Cardiac septum (tissue), 1 donor: ENCODE measurements at regions of chr3 and their contacts with region 1.

Region 1: DNA sequence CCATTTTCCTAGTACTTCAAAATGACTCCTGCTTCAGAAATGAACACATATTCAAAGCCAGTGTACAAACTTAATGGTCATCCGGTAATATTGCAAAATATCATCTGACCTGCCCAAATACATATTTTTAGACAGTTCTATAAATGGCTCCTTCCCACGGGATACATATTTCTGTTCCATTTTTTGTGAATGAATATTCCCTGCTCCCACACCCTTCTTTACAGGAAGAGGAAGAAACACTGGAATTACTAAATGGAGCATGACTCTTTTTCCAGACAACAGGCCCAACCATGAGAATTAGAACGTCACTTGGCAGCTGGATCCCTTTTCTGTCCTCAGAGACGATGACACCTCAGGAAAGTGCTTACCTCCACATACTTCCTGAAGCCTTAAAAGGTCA is 38.0 kb upstream of the CBLB start:
- DNase-seq: no peak

Region 2: GRCh38 chr3:105505170-105505569 is 401.7 kb before region 1 on chr3:
- intact Hi-C with region 1: no loop called
- DNase-seq: no peak

Region 3: GRCh38 chr3:105827959-105828358 is 78.9 kb before region 1 on chr3:
- intact Hi-C with region 1: loop called (anchors 5 kb)
- DNase-seq: no peak